ENCODE measurements at regions of chr13 and their contacts with region 1.

Region 1: DNA sequence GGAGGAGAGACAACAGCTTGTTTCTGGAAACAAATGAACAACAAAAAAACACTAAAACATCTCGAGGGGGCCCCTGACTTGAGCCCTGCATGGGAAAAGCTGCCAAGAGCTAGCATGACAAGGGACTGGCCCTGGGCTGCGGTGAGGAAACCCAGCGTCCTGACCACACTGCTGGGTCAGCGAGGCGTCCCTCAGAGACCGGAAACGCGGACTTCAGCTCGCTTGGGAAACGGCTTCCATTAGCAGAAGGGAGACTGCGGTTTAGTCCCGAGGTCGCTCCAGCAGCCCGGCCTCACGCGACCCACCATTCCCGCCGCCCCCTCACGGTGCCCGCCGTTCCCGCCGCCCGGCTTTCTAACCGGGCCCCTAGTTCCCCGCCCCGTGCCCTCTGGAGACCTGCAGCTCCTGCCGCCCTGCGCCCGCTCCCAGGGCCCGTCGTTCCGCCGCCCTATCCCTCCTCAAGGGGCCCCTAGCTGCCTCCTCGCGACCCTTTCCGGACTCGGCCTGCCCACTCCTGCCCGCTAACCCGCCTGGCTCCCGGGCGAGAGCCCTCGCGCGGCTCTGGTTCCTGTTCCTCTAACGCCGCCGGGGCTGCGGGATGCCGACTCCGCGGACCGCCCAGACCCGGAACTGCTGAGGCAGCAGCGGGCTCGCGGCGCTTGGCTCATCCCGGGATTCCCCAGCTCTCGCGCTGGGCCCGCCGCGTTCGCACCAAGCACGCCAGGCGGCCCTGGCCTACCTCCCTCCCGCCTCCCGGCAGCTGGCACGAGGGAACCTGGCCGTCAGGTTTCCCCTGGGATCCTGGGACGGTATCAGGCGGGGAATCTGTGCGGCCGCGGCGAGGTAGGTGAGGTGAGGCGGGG is at the start of gene CCDC122:
- DNase-seq: peak; percentile 77
- H3K4me3 ChIP-seq: peak within 1 kb of the TSS; percentile 51
- H3K27ac ChIP-seq: peak within 1 kb of the TSS; percentile 58
- H3K4me1 ChIP-seq: no peaks in the 10 kb centered on the region
- H3K27me3 ChIP-seq: peaks cover 22% of the 10 kb centered on the region
- CTCF ChIP-seq: no peak
- total RNA-seq, gene CCDC122: 1.2 and 2.6 TPM in 2 replicates

Region 2: DNA sequence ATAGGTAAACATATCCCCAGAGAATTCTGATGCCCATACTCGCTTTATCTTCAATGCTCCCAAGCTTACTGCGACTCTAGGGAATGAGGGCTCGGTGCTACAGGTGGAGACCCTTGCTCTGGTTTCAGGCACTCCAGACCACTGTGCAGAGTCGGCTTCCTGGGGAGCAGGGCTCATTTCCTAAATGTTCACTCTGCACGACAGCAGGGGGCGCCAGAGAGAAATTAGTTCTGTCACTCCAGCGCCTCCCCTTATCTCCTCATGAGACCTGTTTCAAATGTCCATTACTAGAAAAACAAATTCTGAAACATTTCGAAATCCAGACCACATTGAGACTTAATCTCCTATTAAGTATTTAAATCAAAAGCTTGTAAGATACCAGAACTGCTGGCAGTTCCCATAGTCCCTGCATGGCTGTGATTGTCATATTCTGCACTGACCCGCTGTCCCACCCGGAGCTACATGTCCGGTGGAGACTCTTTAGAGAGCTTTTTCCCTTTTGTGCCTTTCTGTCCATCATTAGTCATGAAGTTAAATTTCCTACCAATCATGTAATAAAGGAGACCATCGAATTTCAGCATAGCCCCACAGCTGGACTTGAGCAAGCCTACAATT is 909.5 kb before region 1 on chr13:
- CTCF ChIA-PET with region 1: no interaction called
- POLR2A ChIA-PET with region 1: no interaction called
- intact Hi-C with region 1: loop called (anchors 2 kb)
- DNase-seq: peak; percentile 83
- H3K4me3 ChIP-seq: no peak overlapping the region
- H3K27ac ChIP-seq: no peak overlapping the region
- H3K4me1 ChIP-seq: peaks cover 9% of the 10 kb centered on the region
- H3K27me3 ChIP-seq: no peaks in the 10 kb centered on the region
- CTCF ChIP-seq: peak; percentile 85

Region 3: GRCh38 chr13:43085545-43085944 is 793.6 kb before region 1 on chr13:
- CTCF ChIA-PET with region 1: no interaction called
- POLR2A ChIA-PET with region 1: no interaction called
- intact Hi-C with region 1: loop called (anchors 5 kb)
- DNase-seq: peak; percentile 40
- H3K4me3 ChIP-seq: no peak overlapping the region
- H3K27ac ChIP-seq: no peak overlapping the region
- H3K4me1 ChIP-seq: no peaks in the 10 kb centered on the region
- H3K27me3 ChIP-seq: no peaks in the 10 kb centered on the region
- CTCF ChIP-seq: peak; percentile 62